ENCODE measurements at regions of chr2 and their contacts with region 1.

Region 1: DNA sequence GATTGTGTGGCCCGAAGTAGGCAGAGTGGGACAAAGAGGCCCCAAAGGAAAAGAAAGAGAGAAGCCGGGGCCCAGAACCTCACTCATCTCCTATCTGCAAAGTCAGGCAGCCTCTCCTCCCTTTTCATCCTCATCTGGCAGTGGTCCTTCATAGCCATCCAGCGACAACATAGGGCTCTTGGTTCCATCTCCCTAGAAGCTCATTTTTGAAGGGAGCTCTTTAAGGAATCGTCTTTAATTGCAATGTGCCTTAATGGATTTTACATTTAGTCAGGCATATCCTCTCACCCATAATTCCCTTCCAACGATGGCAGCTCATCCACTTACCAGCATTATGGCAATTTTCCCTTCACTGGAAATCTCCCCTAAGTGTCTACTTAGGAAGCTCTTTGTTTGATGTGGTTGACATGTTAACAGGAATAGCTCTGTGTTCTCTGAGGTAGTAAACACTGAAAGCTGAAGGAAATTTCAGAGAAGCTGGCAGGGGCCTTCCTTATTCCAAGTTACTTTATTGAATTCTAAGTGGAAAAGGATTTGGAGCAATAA is 780.6 kb downstream of the TSN start:
- DNase-seq: no peak
- CTCF ChIP-seq: no peak

Region 2: DNA sequence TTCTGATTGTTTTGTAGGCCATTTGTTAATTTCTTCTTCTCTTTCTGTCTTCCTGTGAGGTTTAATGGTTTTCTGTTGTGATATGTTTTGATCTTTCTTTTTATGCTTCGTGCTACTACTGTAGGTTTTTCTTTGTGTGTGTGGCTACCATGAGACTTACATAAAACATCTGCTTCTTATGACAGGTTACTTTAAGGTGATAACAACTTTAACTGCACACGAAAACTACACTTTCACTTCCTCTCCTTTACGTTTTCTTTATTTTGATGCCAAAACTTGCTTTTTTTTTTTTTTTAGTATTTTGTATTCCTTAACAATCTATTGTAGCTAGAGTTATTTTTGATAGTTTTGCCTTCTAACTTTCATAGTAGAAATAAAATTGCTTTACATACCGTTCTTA is 89.3 kb before region 1 on chr2:
- CTCF ChIA-PET with region 1: no interaction called
- POLR2A ChIA-PET with region 1: no interaction called
- DNase-seq: no peak
- CTCF ChIP-seq: no peak

Region 3: GRCh38 chr2:122525336-122525735 is 10.7 kb before region 1 on chr2:
- CTCF ChIA-PET with region 1: interaction called, 11 read pairs
- POLR2A ChIA-PET with region 1: no interaction called
- DNase-seq: no peak
- CTCF ChIP-seq: no peak

Measured in GM10248 (cell line).